ENCODE measurements at regions of chr1 and their contacts with region 1.

Region 1: GRCh38 chr1:182391362-182392044 is at the start of gene GLUL:
- DNase-seq: peak; percentile 94 to 98 (median 95)
- ATAC-seq: peak; percentile 87 to 95 (median 92)
- H3K4me3 ChIP-seq: peak within 1 kb of the TSS; percentile 65 to 97 (median 90)
- H3K27ac ChIP-seq: peak within 1 kb of the TSS; percentile 93 to 100 (median 99)
- H3K4me1 ChIP-seq: peaks cover 0 to 71% (median 32%) of the 10 kb centered on the region in 12 donors
- H3K27me3 ChIP-seq: no peaks in the 10 kb centered on the region
- CTCF ChIP-seq: peak in 7 of 12 donors; percentile 8 to 48 (median 16)
- POLR2A ChIP-seq: peak; percentile 93 to 99
- total RNA-seq, gene GLUL: 276 to 965 (median 520) TPM

Region 2: DNA sequence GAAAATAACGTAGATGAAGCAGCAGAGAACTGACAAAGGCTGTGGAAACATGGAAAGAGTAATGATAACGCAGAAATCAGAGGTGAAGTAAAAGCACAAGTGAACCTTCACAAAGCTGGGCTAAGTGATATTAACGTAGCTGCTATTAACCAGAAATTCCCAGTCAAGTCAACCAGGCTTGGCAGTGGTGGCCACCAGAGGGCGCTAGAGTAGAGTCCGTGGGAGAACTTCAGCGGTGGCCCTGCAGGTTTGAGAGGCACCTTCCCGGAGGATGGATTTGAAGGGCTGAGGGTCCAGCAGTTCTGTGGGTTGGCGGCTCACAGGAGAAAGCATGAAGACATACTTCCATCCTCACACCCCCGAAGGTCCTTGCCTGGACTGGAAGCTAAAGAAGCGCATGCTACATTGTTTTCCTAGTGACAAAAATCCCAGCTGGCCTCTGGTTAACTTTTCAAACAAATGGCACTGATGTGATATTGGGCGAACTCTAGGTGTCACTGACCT is 248.3 kb before region 1 on chr1:
- intact Hi-C with region 1: loop called (anchors 1 to 2 kb)
- DNase-seq: peak; percentile 89 to 95 (median 91)
- ATAC-seq: peak; percentile 58 to 86 (median 74)
- H3K4me3 ChIP-seq: no peak overlapping the region
- H3K27ac ChIP-seq: peak overlapping the region; percentile 69 to 97 (median 84)
- H3K4me1 ChIP-seq: peaks cover 7 to 53% (median 21%) of the 10 kb centered on the region in 12 donors
- H3K27me3 ChIP-seq: peaks cover 0 to 5% (median 0%) of the 10 kb centered on the region in 9 donors
- CTCF ChIP-seq: peak; percentile 87 to 98 (median 96)
- POLR2A ChIP-seq: no peak

Region 3: GRCh38 chr1:182259229-182259872 is 132.2 kb before region 1 on chr1:
- intact Hi-C with region 1: loop called in 1 of 10 experiments (anchors 10 kb)
- DNase-seq: peak; percentile 44 to 75 (median 60)
- ATAC-seq: peak; percentile 35 to 69 (median 60)
- H3K4me3 ChIP-seq: no peak overlapping the region
- H3K27ac ChIP-seq: peak overlapping the region in 5 of 12 donors; percentile 8 to 88 (median 46)
- H3K4me1 ChIP-seq: peaks cover 6 to 53% (median 15%) of the 10 kb centered on the region in 12 donors
- H3K27me3 ChIP-seq: no peaks in the 10 kb centered on the region
- CTCF ChIP-seq: no peak
- POLR2A ChIP-seq: no peak

Region 4: GRCh38 chr1:182301467-182302198 is 89.9 kb before region 1 on chr1:
- intact Hi-C with region 1: loop called in 6 of 10 experiments (anchors 5 to 10 kb)
- DNase-seq: peak in 4 of 5 donors; percentile 30 to 77 (median 32)
- ATAC-seq: peak; percentile 57 to 92 (median 86)
- H3K4me3 ChIP-seq: no peak overlapping the region
- H3K27ac ChIP-seq: peak overlapping the region in 7 of 12 donors; percentile 23 to 64 (median 46)
- H3K4me1 ChIP-seq: peaks cover 0 to 29% (median 6%) of the 10 kb centered on the region in 12 donors
- H3K27me3 ChIP-seq: no peaks in the 10 kb centered on the region
- CTCF ChIP-seq: peak in 3 of 12 donors; percentile 25 to 37 (median 28)
- POLR2A ChIP-seq: no peak

Region 5: GRCh38 chr1:182337736-182338571 is 53.5 kb before region 1 on chr1:
- intact Hi-C with region 1: loop called in 3 of 10 experiments (anchors 5 kb)
- DNase-seq: peak in 2 of 5 donors; percentile 13 to 43
- ATAC-seq: peak; percentile 40 to 65 (median 44)
- H3K4me3 ChIP-seq: no peak overlapping the region
- H3K27ac ChIP-seq: peak overlapping the region in 2 of 12 donors; percentile 3 to 37
- H3K4me1 ChIP-seq: peaks cover 0 to 23% (median 8%) of the 10 kb centered on the region in 12 donors
- H3K27me3 ChIP-seq: no peaks in the 10 kb centered on the region
- CTCF ChIP-seq: no peak
- POLR2A ChIP-seq: no peak

Region 6: DNA sequence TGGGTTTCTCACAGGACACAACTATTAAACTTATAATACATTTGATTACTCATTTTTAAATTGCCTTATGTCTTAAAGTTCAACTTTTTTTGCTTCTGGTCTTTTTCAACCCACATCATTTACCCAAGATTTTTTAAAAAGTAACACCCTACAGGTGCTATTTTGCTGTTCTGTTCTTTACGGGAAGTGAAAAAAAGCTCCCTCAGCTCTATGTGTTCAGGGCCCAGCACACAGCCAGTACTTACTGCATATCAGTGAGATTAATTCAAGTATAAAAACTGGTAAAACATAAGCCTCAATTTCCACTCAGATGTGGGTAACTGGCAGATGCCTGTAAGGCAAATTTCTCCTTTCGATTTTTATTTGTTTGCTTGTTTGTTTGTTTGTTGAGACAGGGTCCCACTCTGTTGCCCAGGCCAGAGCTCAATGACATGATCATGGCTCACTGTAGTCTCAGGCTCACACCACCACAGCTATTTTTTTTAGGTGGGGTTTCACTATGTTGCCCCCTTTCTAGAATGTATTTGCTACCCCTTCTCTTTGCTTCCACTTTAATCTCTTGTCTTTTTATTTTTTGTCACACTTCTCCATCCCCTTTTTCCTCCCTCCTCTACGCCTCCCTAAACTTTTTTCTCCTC is 177.3 kb after region 1 on chr1:
- intact Hi-C with region 1: no loop called
- DNase-seq: no peak
- ATAC-seq: no peak
- H3K4me3 ChIP-seq: no peak overlapping the region
- H3K27ac ChIP-seq: no peak overlapping the region
- H3K4me1 ChIP-seq: no peaks in the 10 kb centered on the region
- H3K27me3 ChIP-seq: no peaks in the 10 kb centered on the region
- CTCF ChIP-seq: no peak
- POLR2A ChIP-seq: no peak

Region 7: DNA sequence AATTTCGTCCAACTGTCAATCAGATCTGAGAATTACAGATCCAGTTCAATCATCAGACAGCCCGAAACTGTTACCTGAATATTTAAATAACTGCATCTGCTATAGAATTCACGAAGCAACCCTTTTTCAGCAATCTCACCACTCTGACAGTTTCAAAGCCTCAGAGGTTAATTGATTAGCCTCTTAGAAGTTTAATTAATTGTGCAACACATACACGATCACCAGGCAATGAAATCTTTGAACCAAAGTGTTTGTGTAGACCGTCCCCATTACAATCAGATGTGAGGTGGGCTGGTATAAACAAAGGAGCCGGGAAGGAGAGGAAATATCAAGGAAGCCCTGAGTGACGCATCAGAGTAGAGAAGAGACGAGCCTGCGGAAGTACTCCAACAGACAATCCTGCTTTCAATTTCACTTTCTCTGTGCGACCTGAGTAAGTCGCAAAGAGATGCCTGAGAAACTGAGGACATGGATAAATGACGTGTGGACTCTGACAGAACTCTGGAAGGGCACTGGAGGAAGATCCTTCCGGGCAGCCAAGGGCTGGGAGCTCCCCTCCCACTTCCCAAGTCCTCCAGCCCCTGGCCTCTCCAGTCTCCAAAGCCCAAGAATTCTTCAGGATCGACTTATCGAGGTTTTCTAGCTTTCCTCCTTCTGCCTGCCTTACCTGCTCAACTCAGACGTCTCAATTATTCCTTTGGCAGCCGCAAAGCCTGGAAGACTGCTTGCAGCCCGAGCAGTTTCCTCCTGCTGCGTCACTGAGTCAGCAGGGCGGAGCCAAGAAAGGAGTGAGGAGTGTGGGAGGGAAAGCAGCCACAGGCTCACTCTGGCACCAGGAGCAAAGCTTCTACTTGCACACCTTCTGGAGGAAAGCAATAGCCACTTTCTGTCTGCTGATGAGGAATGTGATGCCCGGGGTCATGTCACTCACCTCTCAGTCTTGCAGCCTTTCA is 197.3 kb after region 1 on chr1 and contains the start of gene RNASEL:
- intact Hi-C with region 1: no loop called
- DNase-seq: peak; percentile 70 to 82 (median 76)
- ATAC-seq: peak; percentile 82 to 94 (median 92)
- H3K4me3 ChIP-seq: peak within 1 kb of the TSS; percentile 49 to 90 (median 74)
- H3K27ac ChIP-seq: peak within 1 kb of the TSS; percentile 51 to 99 (median 92)
- H3K4me1 ChIP-seq: peaks cover 0 to 40% (median 6%) of the 10 kb centered on the region in 12 donors
- H3K27me3 ChIP-seq: no peaks in the 10 kb centered on the region
- CTCF ChIP-seq: no peak
- POLR2A ChIP-seq: peak in 1 of 2 donors; percentile 33
- total RNA-seq, gene RNASEL: 2.0 to 6.3 (median 3.0) TPM